ENCODE measurements at regions of chr21 and their contacts with region 1.

Region 1: DNA sequence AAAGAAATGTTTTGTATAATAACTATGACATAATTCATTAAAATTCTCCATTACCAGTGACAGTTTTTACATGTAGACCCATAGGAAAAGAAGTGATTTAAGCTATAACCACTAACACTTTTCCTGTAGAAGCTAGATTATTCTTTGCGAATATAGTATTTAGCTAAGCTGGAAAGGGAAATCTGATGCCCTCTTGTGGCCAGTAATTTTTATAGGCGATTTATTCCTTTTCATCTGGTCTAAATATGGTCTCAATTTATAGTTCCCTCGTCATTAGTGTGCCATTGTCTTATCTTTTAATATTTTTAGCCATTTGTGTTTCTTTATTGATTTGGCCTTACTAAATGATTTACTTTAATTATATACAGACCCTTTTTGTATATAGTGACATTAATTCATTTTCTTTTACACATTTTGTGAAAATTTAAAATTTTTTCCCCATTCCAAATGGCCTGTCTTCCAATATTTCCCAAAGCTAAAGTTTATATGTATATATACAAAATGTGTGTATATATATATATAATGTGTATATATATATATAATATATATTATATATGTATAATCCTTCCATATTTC is 26.7 kb downstream of the BTG3 start:
- DNase-seq: no peak
- ATAC-seq: no peak
- H3K4me3 Mint-ChIP-seq: no peak overlapping the region
- H3K27ac Mint-ChIP-seq: no peak overlapping the region
- H3K4me1 Mint-ChIP-seq: peaks cover 6% of the 10 kb centered on the region
- H3K27me3 Mint-ChIP-seq: no peaks in the 10 kb centered on the region
- CTCF ChIP-seq: peak; percentile 32; the same call in 1 of the 2 replicates

Region 2: DNA sequence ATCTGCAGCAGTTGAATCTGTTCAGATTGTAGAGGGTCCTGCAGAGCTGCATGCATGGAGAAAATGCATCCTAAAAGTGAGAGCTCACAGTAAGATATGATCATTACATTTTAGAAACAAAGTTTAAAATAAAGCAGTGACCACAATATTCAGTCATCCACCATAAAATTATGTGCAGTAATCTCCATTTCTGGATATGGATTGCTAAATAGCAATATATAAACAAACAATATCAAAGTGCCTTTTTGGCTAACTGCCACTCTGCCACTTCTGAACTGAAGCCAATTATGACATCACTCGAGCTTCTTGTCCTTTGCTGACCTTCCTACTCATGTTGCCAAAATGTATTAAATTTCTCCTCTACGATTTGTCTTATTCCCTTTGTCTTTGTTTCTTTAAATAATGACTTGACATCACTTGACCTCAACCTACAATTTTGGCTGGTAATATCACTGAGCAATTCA is 335.2 kb before region 1 on chr21:
- CTCF ChIA-PET with region 1: no interaction called
- POLR2A ChIA-PET with region 1: no interaction called
- DNase-seq: no peak
- ATAC-seq: no peak
- H3K4me3 Mint-ChIP-seq: no peak overlapping the region
- H3K27ac Mint-ChIP-seq: no peak overlapping the region
- H3K4me1 Mint-ChIP-seq: peaks cover 4% of the 10 kb centered on the region; the same call in 1 of the 2 replicates
- H3K27me3 Mint-ChIP-seq: no peaks in the 10 kb centered on the region
- CTCF ChIP-seq: no peak

Region 3: GRCh38 chr21:17512253-17513213 is 73.4 kb before region 1 on chr21 and contains the start of gene CXADR:
- CTCF ChIA-PET with region 1: interaction called, 11 read pairs
- POLR2A ChIA-PET with region 1: no interaction called
- DNase-seq: peak; percentile 90
- ATAC-seq: peak; percentile 83
- H3K4me3 Mint-ChIP-seq: peak within 1 kb of the TSS; percentile 85
- H3K27ac Mint-ChIP-seq: peak within 1 kb of the TSS; percentile 96
- H3K4me1 Mint-ChIP-seq: peaks cover 47% of the 10 kb centered on the region
- H3K27me3 Mint-ChIP-seq: no peaks in the 10 kb centered on the region
- CTCF ChIP-seq: peak; percentile 79
- total RNA-seq, gene CXADR: 119 to 125 TPM (median 119 TPM) in 3 replicates

Region 4: DNA sequence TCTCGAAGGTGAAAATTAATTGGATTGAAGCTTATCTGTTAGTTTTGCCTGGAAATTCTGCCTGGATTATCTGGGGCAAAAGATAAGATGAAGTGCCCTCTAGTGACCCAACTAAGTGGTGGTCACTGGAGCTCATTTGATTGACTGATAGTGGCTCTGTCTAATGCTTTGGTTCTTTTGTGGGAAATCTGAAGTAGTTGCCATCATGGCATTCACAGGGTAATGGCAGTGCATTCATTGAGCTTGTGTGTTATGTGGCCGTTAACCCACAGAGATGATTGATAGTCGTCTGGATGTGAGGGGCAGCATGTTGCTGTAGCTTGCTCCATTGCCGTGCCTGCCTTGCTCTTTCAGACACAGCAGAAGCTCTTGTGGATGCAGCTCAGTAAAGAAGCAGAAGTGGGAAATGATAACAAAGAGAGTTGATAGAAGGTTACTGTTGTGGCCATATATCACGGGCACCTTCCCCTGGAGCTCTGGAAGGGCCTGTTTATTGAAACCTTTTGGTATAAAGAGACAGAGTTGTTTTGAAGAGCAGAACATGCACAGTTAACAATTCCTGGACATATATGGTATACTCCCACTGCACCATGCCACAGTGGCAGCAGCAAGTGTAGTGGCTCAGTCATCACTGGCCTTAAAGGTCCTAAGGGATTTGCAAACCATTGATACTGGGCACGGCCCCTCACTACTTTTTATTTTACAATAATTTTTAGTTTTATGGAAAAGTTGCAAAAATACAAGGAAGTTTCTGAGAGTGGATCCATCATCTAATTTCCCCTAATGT is 31.1 kb before region 1 on chr21:
- CTCF ChIA-PET with region 1: interaction called, 14 read pairs
- POLR2A ChIA-PET with region 1: no interaction called
- DNase-seq: no peak
- ATAC-seq: peak; percentile 61
- H3K4me3 Mint-ChIP-seq: no peak overlapping the region
- H3K27ac Mint-ChIP-seq: peak overlapping the region; percentile 69
- H3K4me1 Mint-ChIP-seq: peaks cover 8% of the 10 kb centered on the region
- H3K27me3 Mint-ChIP-seq: no peaks in the 10 kb centered on the region
- CTCF ChIP-seq: no peak

Region 5: GRCh38 chr21:17570786-17571185 is 15.2 kb before region 1 on chr21:
- CTCF ChIA-PET with region 1: no interaction called
- POLR2A ChIA-PET with region 1: no interaction called
- DNase-seq: no peak
- ATAC-seq: no peak
- H3K4me3 Mint-ChIP-seq: no peak overlapping the region
- H3K27ac Mint-ChIP-seq: no peak overlapping the region
- H3K4me1 Mint-ChIP-seq: peaks cover 4% of the 10 kb centered on the region; the same call in 1 of the 2 replicates
- H3K27me3 Mint-ChIP-seq: no peaks in the 10 kb centered on the region
- CTCF ChIP-seq: no peak

Region 6: DNA sequence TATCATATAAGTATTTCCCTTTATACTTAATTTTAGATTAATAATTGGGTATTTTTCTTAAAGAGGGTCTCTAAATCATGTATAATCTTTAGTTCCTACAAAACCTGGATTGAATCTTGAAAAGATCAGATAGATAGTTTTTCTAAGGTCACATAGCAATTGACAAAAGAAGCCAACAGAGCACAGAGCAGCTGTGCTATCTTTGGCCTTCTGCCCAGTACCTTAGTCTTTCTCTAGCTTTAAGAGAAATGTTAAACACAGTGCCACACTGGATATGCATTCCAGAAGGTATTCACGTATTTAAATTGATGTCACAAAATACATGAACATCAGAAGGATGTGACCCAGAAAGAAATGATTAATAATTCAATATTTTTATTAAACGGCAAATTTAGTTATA is 146.3 kb after region 1 on chr21:
- CTCF ChIA-PET with region 1: no interaction called
- POLR2A ChIA-PET with region 1: no interaction called
- DNase-seq: no peak
- ATAC-seq: no peak
- H3K4me3 Mint-ChIP-seq: no peak overlapping the region
- H3K27ac Mint-ChIP-seq: no peak overlapping the region
- H3K4me1 Mint-ChIP-seq: no peaks in the 10 kb centered on the region
- H3K27me3 Mint-ChIP-seq: no peaks in the 10 kb centered on the region
- CTCF ChIP-seq: no peak

Measured in WTC11 (cell line).